ENCODE measurements at regions of chr10 and their contacts with region 1.

Region 1: DNA sequence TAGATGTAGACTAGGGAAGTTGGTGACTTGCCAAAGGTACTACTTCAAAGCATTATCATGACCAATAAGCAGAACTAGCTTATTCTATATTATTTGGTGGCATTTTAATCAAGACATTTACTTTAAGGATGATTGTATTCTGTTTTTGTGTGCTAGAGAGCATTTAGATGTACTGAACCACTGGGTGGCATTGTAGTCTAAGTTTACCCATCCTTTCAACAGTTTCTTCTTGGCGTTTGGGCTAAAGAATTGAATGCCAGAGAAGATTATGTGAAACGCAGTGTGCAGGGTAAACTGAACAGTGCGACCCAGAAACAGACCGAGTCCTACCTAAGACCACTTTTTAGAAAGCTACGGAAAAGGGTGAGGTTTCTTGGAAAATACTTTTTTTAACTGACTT is 26.8 kb downstream of the PRPF18 start:
- DNase-seq: peak in 1 of 5 donors; percentile 10
- ATAC-seq: peak in 3 of 4 donors; percentile 61 to 63 (median 61)
- H3K4me3 ChIP-seq: no peak overlapping the region
- H3K27ac ChIP-seq: no peak overlapping the region
- H3K4me1 ChIP-seq: peaks cover 0 to 13% (median 0%) of the 10 kb centered on the region in 12 donors
- H3K27me3 ChIP-seq: no peaks in the 10 kb centered on the region
- CTCF ChIP-seq: peak in 11 of 12 donors; percentile 7 to 62 (median 51)
- POLR2A ChIP-seq: no peak

Region 2: GRCh38 chr10:13649844-13650521 is 36.5 kb after region 1 on chr10:
- intact Hi-C with region 1: loop called in 1 of 10 experiments (anchors 5 kb)
- DNase-seq: no peak
- ATAC-seq: no peak
- H3K4me3 ChIP-seq: no peak overlapping the region
- H3K27ac ChIP-seq: no peak overlapping the region
- H3K4me1 ChIP-seq: peaks cover 0 to 6% (median 0%) of the 10 kb centered on the region in 12 donors
- H3K27me3 ChIP-seq: no peaks in the 10 kb centered on the region
- CTCF ChIP-seq: no peak
- POLR2A ChIP-seq: no peak

Region 3: DNA sequence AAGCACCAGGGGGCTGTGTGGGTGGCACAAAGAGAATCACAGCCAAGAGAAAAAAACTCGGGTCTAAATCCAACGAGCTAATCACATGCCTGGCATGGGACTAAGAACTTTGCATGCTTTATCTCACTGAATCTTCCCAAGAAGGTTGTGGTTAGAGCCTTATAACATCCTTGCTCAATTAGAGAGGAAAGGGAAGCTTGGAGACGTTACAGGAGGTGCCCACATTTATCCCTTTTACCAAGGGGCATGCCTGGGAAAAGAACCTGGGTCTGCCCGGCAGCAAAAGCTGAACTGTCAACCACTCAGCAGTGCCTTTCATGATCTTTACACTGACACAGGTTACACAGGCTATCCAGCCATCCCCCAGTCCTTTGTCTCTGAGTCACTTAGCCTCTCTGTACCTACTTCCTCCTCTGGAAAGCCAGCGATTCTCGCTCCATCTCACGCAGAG is 163.4 kb after region 1 on chr10:
- intact Hi-C with region 1: loop called (anchors 2 to 5 kb)
- DNase-seq: no peak
- ATAC-seq: no peak
- H3K4me3 ChIP-seq: no peak overlapping the region
- H3K27ac ChIP-seq: no peak overlapping the region
- H3K4me1 ChIP-seq: peaks cover 0 to 29% (median 11%) of the 10 kb centered on the region in 12 donors
- H3K27me3 ChIP-seq: no peaks in the 10 kb centered on the region
- CTCF ChIP-seq: no peak
- POLR2A ChIP-seq: no peak

Region 4: DNA sequence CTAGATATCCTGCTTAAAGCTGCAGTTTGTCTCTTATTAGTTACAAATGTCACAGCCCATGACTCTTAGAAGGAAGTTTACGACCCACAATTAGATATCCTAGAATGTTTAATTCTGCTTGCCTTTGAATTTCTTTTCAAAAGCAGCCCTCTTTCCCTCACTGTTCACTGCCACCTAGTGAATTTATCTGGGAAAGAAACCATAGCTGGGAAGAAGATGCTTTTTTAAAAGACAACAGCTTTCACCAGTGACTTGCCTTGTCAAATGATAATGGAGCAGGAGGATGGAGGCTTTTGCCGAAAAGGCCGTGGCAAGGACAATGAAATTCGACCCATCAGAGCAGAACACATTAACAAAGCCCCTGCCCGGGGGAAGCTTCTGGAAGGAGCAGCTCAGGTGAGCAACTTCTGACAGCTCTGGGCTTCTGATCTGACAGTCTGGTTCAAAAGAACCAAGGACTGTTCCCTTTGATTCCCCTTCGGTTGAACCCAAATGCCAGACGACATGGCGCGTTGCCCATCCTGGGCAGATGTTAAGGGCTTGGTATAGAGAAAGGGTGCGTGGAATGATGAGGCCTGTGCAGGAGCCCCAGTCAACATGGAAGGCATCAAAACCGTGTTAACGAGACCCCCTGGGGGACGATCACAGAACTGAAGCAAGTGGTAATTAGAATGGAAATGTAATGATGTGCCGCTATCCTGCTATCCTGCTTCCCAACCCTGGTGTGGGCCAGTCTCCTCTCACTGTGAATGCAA is 480.4 kb after region 1 on chr10:
- intact Hi-C with region 1: loop called in 1 of 10 experiments (anchors 10 kb)
- DNase-seq: no peak
- ATAC-seq: peak in 1 of 4 donors; percentile 53
- H3K4me3 ChIP-seq: no peak overlapping the region
- H3K27ac ChIP-seq: no peak overlapping the region
- H3K4me1 ChIP-seq: peaks cover 0 to 10% (median 4%) of the 10 kb centered on the region in 12 donors
- H3K27me3 ChIP-seq: no peaks in the 10 kb centered on the region
- CTCF ChIP-seq: peak; percentile 36 to 69 (median 55)
- POLR2A ChIP-seq: no peak